H1 (cell line): ENCODE measurements at regions of chr6 and their contacts with region 1.

Region 1: GRCh38 chr6:3732345-3733141 is 19.0 kb downstream of the PXDC1 start:
- DNase-seq: peak in 1 of 2 experiments; percentile 85
- H3K4me3 ChIP-seq: no peak overlapping the region
- H3K27ac ChIP-seq: no peak overlapping the region
- H3K4me1 ChIP-seq: peaks cover 0 to 4% (median 2%) of the 10 kb centered on the region in 4 experiments; a peak in 4 of 7 replicates
- H3K27me3 ChIP-seq: no peaks in the 10 kb centered on the region
- CTCF ChIP-seq: peak; percentile 78 to 96 (median 88)
- EP300 ChIP-seq: no peak
- POLR2A ChIP-seq: no peak
- RAD21 ChIP-seq: peak; percentile 99 to 100

Region 2: GRCh38 chr6:3294921-3295871 is 437.3 kb before region 1 on chr6:
- CTCF ChIA-PET with region 1: interaction called, 10 read pairs
- POLR2A ChIA-PET with region 1: no interaction called
- DNase-seq: no peak
- H3K4me3 ChIP-seq: no peak overlapping the region
- H3K27ac ChIP-seq: no peak overlapping the region
- H3K4me1 ChIP-seq: no peaks in the 10 kb centered on the region
- H3K27me3 ChIP-seq: no peaks in the 10 kb centered on the region
- CTCF ChIP-seq: peak; percentile 43 to 64 (median 60); a peak in 3 of 4 replicates
- EP300 ChIP-seq: no peak
- POLR2A ChIP-seq: no peak
- RAD21 ChIP-seq: peak; percentile 66 to 74

Region 3: GRCh38 chr6:3526962-3527650 is 205.4 kb before region 1 on chr6:
- CTCF ChIA-PET with region 1: interaction called, 11 read pairs
- POLR2A ChIA-PET with region 1: no interaction called
- DNase-seq: no peak
- H3K4me3 ChIP-seq: no peak overlapping the region
- H3K27ac ChIP-seq: no peak overlapping the region
- H3K4me1 ChIP-seq: peaks cover 0 to 9% (median 3%) of the 10 kb centered on the region in 4 experiments; a peak in 3 of 7 replicates
- H3K27me3 ChIP-seq: peaks cover 0 to 2% (median 0%) of the 10 kb centered on the region in 4 experiments; a peak in 1 of 7 replicates
- CTCF ChIP-seq: no peak
- EP300 ChIP-seq: no peak
- POLR2A ChIP-seq: no peak
- RAD21 ChIP-seq: no peak

Region 4: DNA sequence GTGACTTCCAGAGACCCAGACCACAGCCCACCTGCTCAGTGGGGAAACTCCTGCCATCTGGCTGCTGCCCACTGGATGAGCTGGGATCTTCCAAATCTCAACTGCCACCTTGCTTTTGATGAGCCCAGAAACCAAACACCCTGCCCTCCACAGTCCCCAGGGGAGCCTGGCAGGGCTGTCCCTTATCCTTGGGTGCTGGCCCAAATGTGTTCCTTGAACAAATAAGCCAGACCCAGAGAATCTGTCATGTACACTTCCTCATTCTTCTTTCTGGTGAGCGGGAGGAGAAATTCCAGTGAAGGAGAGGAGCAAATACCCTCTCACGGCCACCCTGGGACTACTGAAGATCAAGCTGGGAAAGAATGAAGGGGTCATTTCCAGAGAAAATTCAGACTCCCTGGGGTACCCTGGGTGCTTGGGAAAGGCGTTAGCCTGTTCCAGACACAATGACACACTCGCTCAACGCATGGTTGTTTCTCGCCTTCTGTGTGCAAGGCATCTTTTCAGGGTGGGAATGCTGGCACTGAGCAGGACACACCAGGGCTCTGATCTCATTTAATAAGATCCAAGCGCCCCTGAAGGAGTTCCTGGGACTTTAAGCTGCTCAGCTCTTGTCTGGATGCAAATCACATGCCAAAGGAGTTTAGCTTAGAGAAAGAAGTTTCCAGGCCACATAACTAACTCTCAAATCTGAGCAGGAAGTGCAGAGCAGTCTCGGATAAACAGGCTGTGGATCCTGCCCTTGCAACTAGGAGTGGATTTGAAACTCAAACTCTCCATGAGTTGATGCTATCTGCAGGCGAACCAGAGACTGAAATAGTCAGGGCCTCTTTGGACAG is 19.5 kb before region 1 on chr6:
- CTCF ChIA-PET with region 1: interaction called, 16 read pairs
- POLR2A ChIA-PET with region 1: no interaction called
- DNase-seq: no peak
- H3K4me3 ChIP-seq: no peak overlapping the region
- H3K27ac ChIP-seq: no peak overlapping the region
- H3K4me1 ChIP-seq: no peaks in the 10 kb centered on the region
- H3K27me3 ChIP-seq: no peaks in the 10 kb centered on the region
- CTCF ChIP-seq: no peak
- EP300 ChIP-seq: no peak
- POLR2A ChIP-seq: no peak
- RAD21 ChIP-seq: no peak

Region 5: DNA sequence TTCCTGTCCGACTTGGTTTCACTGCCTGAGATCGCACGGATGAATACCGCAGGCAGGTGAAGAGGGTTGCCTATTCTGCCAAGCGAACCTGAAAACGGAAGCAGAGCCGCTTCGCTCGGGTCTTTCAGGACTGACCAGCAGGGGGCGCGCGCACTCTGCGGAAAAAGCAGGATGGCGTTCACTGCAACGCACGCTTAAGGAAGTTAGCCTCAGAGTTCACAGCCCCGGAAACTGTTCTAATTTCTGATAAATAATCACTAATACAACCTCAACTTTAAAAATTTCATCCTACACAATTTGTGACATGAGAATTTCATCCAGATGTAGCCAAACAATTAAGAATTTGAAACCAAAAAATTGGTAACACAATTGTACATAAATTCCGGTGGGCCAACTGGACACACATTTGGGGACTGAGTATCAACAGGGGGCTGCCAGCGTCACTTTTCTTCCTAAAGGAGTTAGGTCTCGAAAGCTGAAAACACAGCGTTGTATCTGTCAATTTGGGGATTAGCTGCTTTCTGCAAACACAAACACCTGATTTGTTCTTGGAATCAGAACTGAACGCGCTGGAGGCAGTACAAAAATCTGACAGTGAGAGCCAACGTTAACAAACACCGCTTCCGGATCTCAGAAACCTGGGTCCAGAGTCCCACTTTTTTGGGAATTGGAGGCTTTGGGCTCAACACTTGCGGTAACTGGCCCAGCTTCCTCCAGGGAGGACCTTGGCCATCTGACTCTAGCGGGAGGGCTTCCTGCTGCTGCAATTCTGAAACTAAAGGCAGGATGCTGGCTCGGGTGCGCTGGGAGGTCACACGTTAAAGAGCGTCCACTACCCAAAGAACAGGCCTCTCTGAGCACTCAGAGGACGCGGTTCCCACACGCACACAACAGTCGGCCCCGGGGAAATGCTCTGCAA is 10.1 kb after region 1 on chr6:
- CTCF ChIA-PET with region 1: interaction called, 14 read pairs
- POLR2A ChIA-PET with region 1: no interaction called
- DNase-seq: peak; percentile 60 to 98
- H3K4me3 ChIP-seq: no peak overlapping the region
- H3K27ac ChIP-seq: no peak overlapping the region
- H3K4me1 ChIP-seq: peaks cover 0 to 9% (median 4%) of the 10 kb centered on the region in 4 experiments; a peak in 5 of 7 replicates
- H3K27me3 ChIP-seq: peaks cover 0 to 2% (median 0%) of the 10 kb centered on the region in 4 experiments; a peak in 1 of 7 replicates
- CTCF ChIP-seq: peak in 2 of 3 experiments; percentile 91 to 94; a peak in 3 of 4 replicates
- EP300 ChIP-seq: no peak
- POLR2A ChIP-seq: no peak
- RAD21 ChIP-seq: peak; percentile 96 to 97